ENCODE measurements at regions of chr12 and their contacts with region 1.

Region 1: DNA sequence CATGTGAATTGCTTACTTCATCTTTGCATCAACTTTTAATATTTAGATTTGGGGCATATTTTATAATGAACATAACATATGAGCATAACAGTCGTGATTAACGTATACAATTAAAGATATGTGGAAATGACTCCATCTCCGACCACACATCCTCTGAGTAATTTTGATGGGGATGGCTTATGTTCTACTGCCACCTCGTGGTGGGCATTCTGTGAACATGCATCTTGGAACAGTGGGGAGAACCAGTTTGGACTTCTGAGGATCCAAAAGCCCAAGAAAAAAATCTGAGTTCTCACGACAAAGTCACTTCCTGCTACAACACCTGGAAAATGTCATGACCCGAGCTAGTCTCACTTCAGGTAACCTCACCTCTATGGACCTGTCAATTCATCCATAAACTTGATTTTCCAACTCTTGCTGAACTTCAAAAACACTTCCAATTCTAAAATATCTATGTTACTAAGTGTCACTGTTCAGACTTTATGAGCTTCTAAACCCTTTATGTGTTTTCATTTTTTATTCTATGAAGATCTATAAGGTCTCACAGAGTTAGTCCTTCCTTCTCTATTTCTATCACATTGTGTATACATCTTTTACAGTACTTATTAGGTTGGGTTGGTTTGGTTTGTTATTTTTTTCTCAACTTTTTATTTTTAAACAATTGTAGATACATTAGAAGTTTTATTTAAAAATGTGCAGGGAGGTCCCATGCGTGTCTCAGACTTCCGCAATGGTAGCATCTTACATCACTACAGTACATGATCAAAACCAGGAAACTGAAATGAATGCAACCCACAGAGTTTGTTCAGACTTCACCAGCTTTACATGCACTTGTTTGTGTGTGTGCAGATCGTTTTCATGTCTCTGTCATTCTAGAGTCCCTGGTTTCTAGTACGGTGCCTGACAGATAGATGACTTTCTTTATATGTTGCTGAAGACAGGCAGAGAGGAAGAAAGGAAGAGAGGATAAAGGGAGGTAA is 38.2 kb upstream of the STAB2 start:
- DNase-seq: peak in 1 of 2 donors; percentile 64
- H3K4me3 ChIP-seq: no peak overlapping the region
- H3K27ac ChIP-seq: no peak overlapping the region
- H3K4me1 ChIP-seq: no peaks in the 10 kb centered on the region
- H3K27me3 ChIP-seq: peaks cover 0 to 16% of the 10 kb centered on the region in 2 donors
- CTCF ChIP-seq: peak; percentile 73 to 74

Region 2: GRCh38 chr12:102958073-102958829 is 590.7 kb before region 1 on chr12:
- intact Hi-C with region 1: loop called (anchors 10 kb)
- DNase-seq: no peak
- H3K4me3 ChIP-seq: peak overlapping the region; percentile 39 to 48
- H3K27ac ChIP-seq: no peak overlapping the region
- H3K4me1 ChIP-seq: peaks cover 0 to 34% (median 23%) of the 10 kb centered on the region in 4 donors
- H3K27me3 ChIP-seq: peaks cover 0 to 91% of the 10 kb centered on the region in 2 donors
- CTCF ChIP-seq: no peak

Region 3: GRCh38 chr12:103495479-103496456 is 53.1 kb before region 1 on chr12 and contains the start of gene C12orf42:
- intact Hi-C with region 1: no loop called
- DNase-seq: no peak
- H3K4me3 ChIP-seq: peak within 1 kb of the TSS; percentile 20 to 45
- H3K27ac ChIP-seq: no peak within 1 kb of the TSS
- H3K4me1 ChIP-seq: peaks cover 0 to 15% (median 11%) of the 10 kb centered on the region in 4 donors
- H3K27me3 ChIP-seq: peaks cover 0 to 42% of the 10 kb centered on the region in 2 donors
- CTCF ChIP-seq: no peak

Region 4: DNA sequence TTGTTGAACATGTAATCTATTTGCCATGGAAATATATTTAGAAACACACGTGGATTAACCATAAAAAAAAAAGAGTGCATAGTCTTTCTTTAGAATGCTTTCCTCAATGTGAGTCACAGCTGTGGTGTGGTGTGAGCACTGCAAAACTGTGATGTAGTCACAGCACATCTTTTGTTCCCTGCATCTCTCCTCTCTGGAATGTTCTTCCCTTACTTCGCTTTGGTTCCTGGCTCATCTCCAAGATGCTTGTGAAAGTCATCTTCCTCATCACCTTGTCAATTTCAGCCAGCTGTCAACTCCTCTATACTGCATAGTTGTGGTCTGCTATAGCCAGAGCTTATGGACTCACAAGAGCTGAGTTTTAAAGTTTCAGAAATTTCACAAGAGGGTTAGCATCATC is 98.4 kb after region 1 on chr12:
- intact Hi-C with region 1: no loop called
- DNase-seq: no peak
- H3K4me3 ChIP-seq: no peak overlapping the region
- H3K27ac ChIP-seq: no peak overlapping the region
- H3K4me1 ChIP-seq: peaks cover 0 to 8% (median 1%) of the 10 kb centered on the region in 4 donors
- H3K27me3 ChIP-seq: no peaks in the 10 kb centered on the region
- CTCF ChIP-seq: no peak